ENCODE measurements at regions of chr3 and their contacts with region 1.

Region 1: GRCh38 chr3:16600780-16601539 is 4.3 kb downstream of the DAZL start:
- DNase-seq: peak; percentile 83
- H3K4me3 ChIP-seq: no peak overlapping the region
- H3K27ac ChIP-seq: no peak overlapping the region
- H3K4me1 ChIP-seq: no peaks in the 10 kb centered on the region
- H3K27me3 ChIP-seq: no peaks in the 10 kb centered on the region
- CTCF ChIP-seq: peak; percentile 76 to 83

Region 2: GRCh38 chr3:16978234-16978920 is 377.4 kb after region 1 on chr3:
- intact Hi-C with region 1: no loop called
- DNase-seq: no peak
- H3K4me3 ChIP-seq: peak overlapping the region in 1 of 2 donors; percentile 9
- H3K27ac ChIP-seq: peak overlapping the region; percentile 18 to 67
- H3K4me1 ChIP-seq: peaks cover 0 to 19% (median 2%) of the 10 kb centered on the region in 4 donors
- H3K27me3 ChIP-seq: no peaks in the 10 kb centered on the region
- CTCF ChIP-seq: no peak

Region 3: DNA sequence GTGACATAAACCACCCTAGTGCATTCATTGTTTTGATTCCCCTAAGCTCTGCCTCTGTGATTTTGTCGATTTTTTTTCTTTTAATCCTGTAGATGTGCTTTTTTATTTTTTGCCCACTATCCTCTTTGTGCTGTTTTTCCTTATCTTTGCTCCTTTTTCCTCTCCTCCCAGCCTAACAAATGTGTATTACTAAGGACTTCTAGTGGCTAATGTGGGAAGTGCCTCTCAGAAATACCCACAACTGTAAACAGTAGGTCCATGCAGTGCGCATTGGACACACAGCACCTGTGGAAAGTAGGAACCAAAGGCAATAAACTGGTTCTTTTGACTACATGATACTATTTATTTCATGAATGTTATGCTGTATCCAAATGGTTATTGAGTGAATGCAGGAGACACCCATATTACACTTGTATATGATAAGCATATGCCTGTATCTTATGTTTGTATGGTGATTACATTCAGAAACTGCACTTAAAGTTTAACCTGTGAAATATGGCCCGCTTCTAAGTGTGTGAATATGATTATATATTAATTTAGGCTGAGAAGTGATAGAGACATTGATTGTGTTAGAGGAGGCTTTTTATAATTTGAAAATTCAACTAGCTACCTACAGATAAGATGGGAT is 431.6 kb after region 1 on chr3:
- intact Hi-C with region 1: loop called (anchors 5 kb)
- DNase-seq: no peak
- H3K4me3 ChIP-seq: no peak overlapping the region
- H3K27ac ChIP-seq: no peak overlapping the region
- H3K4me1 ChIP-seq: no peaks in the 10 kb centered on the region
- H3K27me3 ChIP-seq: no peaks in the 10 kb centered on the region
- CTCF ChIP-seq: peak; percentile 59 to 72

Region 4: DNA sequence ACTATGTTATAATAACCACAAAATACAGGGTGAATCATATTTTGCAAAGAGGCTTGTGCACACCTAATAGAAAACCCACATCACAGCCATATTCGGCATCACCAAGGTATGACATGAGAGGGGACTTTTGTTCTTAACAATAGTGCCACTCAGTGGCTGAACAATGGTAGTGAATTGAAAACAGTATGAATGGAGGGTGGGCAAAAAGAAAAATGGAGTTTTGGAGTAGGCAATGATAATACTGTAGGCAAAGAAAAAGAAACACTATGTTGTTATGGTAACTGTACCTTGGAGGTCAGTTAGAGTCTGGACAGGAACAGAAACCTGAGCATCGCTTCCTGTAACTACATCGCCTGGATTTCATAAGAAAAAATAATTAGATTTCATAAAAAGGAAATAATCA is 632.4 kb after region 1 on chr3:
- intact Hi-C with region 1: loop called (anchors 5 kb)
- DNase-seq: no peak
- H3K4me3 ChIP-seq: no peak overlapping the region
- H3K27ac ChIP-seq: no peak overlapping the region
- H3K4me1 ChIP-seq: peaks cover 0 to 16% (median 0%) of the 10 kb centered on the region in 4 donors
- H3K27me3 ChIP-seq: no peaks in the 10 kb centered on the region
- CTCF ChIP-seq: peak; percentile 71 to 79

Region 5: DNA sequence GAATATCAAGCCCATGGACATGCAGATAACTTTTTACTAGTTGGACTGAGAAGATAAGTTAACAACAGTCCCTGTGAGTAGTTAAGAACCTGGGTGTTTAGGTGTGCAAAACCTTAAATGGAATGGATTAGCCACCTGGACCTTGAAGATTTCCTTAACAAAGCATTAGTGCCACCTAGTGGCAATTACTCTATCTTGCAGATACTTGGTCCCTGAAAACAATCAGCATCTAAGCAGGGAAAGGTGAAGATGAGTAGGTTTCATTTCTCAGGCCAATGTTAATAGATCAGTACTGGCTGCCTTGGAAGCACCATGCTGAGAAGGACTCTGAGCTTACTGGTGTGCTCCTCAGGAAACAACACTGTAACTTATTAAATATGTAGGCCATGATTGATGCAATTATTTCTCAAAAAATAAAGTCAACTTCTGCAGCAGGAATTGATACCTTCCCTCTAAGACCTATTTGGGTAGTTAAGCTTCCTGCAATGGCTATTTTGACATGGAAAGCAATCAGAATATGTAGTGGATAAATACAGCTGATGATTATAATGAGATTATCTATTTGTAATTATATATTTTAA is 812.1 kb after region 1 on chr3:
- intact Hi-C with region 1: loop called (anchors 10 kb)
- DNase-seq: no peak
- H3K4me3 ChIP-seq: no peak overlapping the region
- H3K27ac ChIP-seq: no peak overlapping the region
- H3K4me1 ChIP-seq: no peaks in the 10 kb centered on the region
- H3K27me3 ChIP-seq: no peaks in the 10 kb centered on the region
- CTCF ChIP-seq: peak; percentile 66 to 68

Measured in tibial artery (tissue), 4 donors.